CD4-positive, alpha-beta memory T cell (primary cell): ENCODE measurements at regions of chrX and their contacts with region 1.

Region 1: DNA sequence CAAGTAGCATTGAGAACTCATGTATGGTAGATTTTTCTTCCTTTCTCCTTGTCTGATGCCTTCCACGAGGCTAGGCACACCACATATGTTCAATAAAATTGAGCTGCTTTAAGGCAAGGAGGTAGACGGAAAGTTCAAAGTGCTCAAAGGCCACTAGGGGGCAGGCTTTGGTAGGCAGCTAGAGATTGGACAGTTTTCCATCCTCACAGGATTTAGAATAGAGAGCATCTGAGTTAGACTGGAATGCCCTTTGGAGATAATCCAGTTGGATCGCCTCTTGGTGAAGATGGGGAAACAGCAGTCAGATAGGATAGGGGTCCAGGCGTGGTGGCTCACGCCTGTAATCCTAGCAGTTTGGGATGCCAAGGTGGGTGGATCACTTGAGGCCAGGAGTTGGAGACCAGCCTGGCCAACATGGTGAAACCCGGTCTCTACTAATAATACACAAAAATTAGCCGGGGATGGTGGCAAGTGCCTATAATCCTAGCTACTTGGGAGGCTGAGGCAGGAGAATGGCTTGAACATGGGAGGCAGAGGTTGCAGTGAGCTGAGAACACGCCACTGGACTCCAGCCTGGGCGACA is 30.4 kb downstream of the ELF4 start:
- DNase-seq: peak; percentile 56 to 63 (median 57)
- H3K4me3 ChIP-seq: no peak overlapping the region
- H3K4me3 Mint-ChIP-seq: peak overlapping the region in 5 of 8 donors; percentile 7 to 58 (median 46)
- H3K27ac ChIP-seq: peak overlapping the region; percentile 9
- H3K27ac Mint-ChIP-seq: peak overlapping the region; percentile 49 to 93 (median 84)
- H3K4me1 ChIP-seq: peaks cover 55% of the 10 kb centered on the region
- H3K4me1 Mint-ChIP-seq: peaks cover 22 to 59% (median 43%) of the 10 kb centered on the region in 4 donors
- H3K27me3 ChIP-seq: no peaks in the 10 kb centered on the region
- H3K27me3 Mint-ChIP-seq: no peaks in the 10 kb centered on the region

Region 2: GRCh38 chrX:130091958-130092522 is 12.1 kb after region 1 on chrX:
- CTCF ChIA-PET with region 1: interaction called, 49 read pairs
- POLR2A ChIA-PET with region 1: interaction called, 28 read pairs
- intact Hi-C with region 1: loop called (anchors 1 kb)
- DNase-seq: peak; percentile 85 to 96 (median 91)
- H3K4me3 ChIP-seq: peak overlapping the region in 1 of 2 donors; percentile 49
- H3K4me3 Mint-ChIP-seq: peak overlapping the region; percentile 87 to 96 (median 90)
- H3K27ac ChIP-seq: peak overlapping the region; percentile 69
- H3K27ac Mint-ChIP-seq: peak overlapping the region; percentile 93 to 99 (median 96)
- H3K4me1 ChIP-seq: peaks cover 79% of the 10 kb centered on the region
- H3K4me1 Mint-ChIP-seq: peaks cover 33 to 82% (median 60%) of the 10 kb centered on the region in 4 donors
- H3K27me3 ChIP-seq: no peaks in the 10 kb centered on the region
- H3K27me3 Mint-ChIP-seq: no peaks in the 10 kb centered on the region

Region 3: GRCh38 chrX:130110379-130111219 is 30.7 kb after region 1 on chrX and contains the start of gene ELF4:
- CTCF ChIA-PET with region 1: interaction called, 163 read pairs
- POLR2A ChIA-PET with region 1: interaction called, 36 read pairs
- intact Hi-C with region 1: no loop called
- DNase-seq: peak; percentile 43 to 79 (median 48)
- H3K4me3 ChIP-seq: peak within 1 kb of the TSS; percentile 57 to 76
- H3K4me3 Mint-ChIP-seq: peak within 1 kb of the TSS; percentile 89 to 94 (median 92)
- H3K27ac ChIP-seq: peak within 1 kb of the TSS; percentile 70
- H3K27ac Mint-ChIP-seq: peak within 1 kb of the TSS; percentile 75 to 93 (median 91)
- H3K4me1 ChIP-seq: peaks cover 31% of the 10 kb centered on the region
- H3K4me1 Mint-ChIP-seq: peaks cover 14 to 43% (median 28%) of the 10 kb centered on the region in 4 donors
- H3K27me3 ChIP-seq: no peaks in the 10 kb centered on the region
- H3K27me3 Mint-ChIP-seq: no peaks in the 10 kb centered on the region
- total RNA-seq, gene ELF4: 29.8 to 31.3 TPM

Region 4: DNA sequence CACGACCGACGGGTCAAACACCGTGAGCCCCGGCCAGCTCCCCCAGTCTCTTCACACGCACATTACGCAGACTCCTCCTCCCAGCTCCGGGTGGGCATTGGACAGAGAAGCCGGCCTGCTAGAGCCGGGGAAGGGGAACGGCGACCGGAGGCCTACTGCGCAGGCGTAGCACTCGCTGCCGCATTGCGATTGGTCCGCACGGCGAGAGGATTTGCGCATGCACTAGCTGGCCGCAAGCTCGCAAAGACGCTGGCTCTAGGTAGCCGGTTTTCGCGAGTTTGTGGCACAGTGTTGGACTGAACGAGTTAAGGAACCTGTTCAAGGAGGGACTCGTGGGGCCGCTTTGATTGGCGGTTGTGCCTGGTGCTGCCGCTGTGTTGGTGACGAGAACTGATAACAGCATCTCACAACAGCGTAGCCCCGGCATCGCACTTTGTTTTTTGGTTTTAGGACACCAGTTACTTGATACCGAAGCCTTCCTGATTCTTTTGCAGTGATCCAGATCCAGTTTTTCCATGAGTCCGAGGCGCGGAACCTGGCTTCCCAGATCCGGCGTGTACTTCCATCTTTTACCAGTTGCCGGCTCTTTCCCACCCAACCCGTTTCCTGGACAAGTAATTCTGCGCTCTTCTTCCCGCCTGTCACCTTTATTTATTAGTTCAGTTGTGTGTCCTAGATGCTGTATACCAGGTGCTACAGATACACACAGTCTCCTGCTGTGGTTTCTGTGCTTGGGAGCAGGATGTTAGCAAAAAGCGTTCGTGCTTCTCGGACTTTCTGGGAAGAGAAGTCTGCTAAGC is 86.0 kb after region 1 on chrX and contains the start of gene AIFM1:
- CTCF ChIA-PET with region 1: interaction called, 24 read pairs
- POLR2A ChIA-PET with region 1: interaction called, 9 read pairs
- intact Hi-C with region 1: loop called (anchors 2 kb)
- DNase-seq: peak; percentile 87 to 93 (median 89)
- H3K4me3 ChIP-seq: peak within 1 kb of the TSS; percentile 74 to 77
- H3K4me3 Mint-ChIP-seq: peak within 1 kb of the TSS; percentile 81 to 99 (median 92)
- H3K27ac ChIP-seq: peak within 1 kb of the TSS; percentile 74
- H3K27ac Mint-ChIP-seq: peak within 1 kb of the TSS; percentile 83 to 97 (median 95)
- H3K4me1 ChIP-seq: peaks cover 32% of the 10 kb centered on the region
- H3K4me1 Mint-ChIP-seq: peaks cover 11 to 57% (median 34%) of the 10 kb centered on the region in 4 donors
- H3K27me3 ChIP-seq: no peaks in the 10 kb centered on the region
- H3K27me3 Mint-ChIP-seq: no peaks in the 10 kb centered on the region
- total RNA-seq, gene AIFM1: 20.0 to 23.6 TPM

Region 5: DNA sequence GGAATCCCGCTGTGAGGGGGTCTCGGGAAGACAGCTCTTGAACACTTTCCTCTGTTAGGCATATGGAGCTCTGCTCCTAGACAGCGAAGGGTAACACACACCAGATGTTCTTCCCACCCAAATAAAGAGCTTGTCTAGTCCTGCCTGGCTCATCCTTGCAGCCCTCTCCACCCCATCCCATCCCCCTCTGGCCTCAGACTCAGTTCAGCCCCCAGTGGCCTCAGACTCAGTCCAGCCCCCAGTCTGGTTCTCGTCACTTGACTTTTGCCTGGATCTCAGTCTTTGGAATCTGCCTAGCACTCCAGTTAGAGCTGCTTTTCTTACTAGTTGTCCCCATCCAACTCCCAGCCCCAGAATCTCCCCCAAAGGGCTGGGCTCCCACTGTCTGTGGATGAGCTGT is 106.7 kb after region 1 on chrX:
- CTCF ChIA-PET with region 1: interaction called, 77 read pairs
- POLR2A ChIA-PET with region 1: interaction called, 5 read pairs
- intact Hi-C with region 1: no loop called
- DNase-seq: no peak
- H3K4me3 ChIP-seq: no peak overlapping the region
- H3K4me3 Mint-ChIP-seq: no peak overlapping the region
- H3K27ac ChIP-seq: no peak overlapping the region
- H3K27ac Mint-ChIP-seq: peak overlapping the region in 3 of 7 donors; percentile 10 to 84 (median 60)
- H3K4me1 ChIP-seq: peaks cover 15% of the 10 kb centered on the region
- H3K4me1 Mint-ChIP-seq: peaks cover 5 to 15% (median 8%) of the 10 kb centered on the region in 4 donors
- H3K27me3 ChIP-seq: no peaks in the 10 kb centered on the region
- H3K27me3 Mint-ChIP-seq: no peaks in the 10 kb centered on the region